Sigmoid colon (tissue), 7 donors: ENCODE measurements at regions of chrX and their contacts with region 1.

Region 1: DNA sequence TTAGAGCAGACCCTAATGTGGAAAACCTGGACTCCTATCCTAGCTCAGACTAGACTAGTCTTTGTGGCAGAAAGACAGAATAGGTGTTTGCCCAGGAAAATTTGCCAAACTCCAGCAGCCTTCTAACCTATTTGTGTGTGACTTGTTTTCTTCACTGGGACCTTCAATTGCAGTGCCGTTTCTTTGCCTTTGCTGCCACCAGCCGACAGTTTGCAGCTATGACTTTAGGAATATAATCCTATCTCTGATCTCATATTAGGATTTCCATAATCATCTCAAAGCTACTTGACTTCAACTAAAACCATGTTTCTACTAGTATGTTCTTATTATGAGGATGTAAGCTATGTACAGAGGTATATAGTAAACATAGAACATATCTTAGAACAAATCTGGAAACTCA is 60.2 kb upstream of the PGAM4 start:
- DNase-seq: no peak
- H3K4me3 ChIP-seq: no peak overlapping the region
- H3K27ac ChIP-seq: no peak overlapping the region
- H3K4me1 ChIP-seq: no peaks in the 10 kb centered on the region
- H3K27me3 ChIP-seq: no peaks in the 10 kb centered on the region
- CTCF ChIP-seq: peak in 2 of 4 experiments; percentile 26 to 28
- EP300 ChIP-seq: no peak
- POLR2A ChIP-seq: no peak

Region 2: GRCh38 chrX:77910108-77910840 is 119.4 kb before region 1 on chrX and contains the start of gene ATP7A:
- intact Hi-C with region 1: loop called (anchors 5 kb)
- DNase-seq: peak; percentile 94
- H3K4me3 ChIP-seq: peak within 1 kb of the TSS; percentile 46 to 59 (median 56)
- H3K27ac ChIP-seq: peak within 1 kb of the TSS; percentile 76 to 87 (median 81)
- H3K4me1 ChIP-seq: peaks cover 0 to 6% (median 0%) of the 10 kb centered on the region in 4 donors
- H3K27me3 ChIP-seq: no peaks in the 10 kb centered on the region
- CTCF ChIP-seq: peak; percentile 29 to 47 (median 44)
- EP300 ChIP-seq: no peak
- POLR2A ChIP-seq: peak in 1 of 2 donors; percentile 29
- total RNA-seq, gene ATP7A: 9.0 to 10.5 (median 10.1) TPM

Region 3: GRCh38 chrX:78092296-78092695 is 62.6 kb after region 1 on chrX:
- intact Hi-C with region 1: no loop called
- DNase-seq: no peak
- H3K4me3 ChIP-seq: no peak overlapping the region
- H3K27ac ChIP-seq: no peak overlapping the region
- H3K4me1 ChIP-seq: no peaks in the 10 kb centered on the region
- H3K27me3 ChIP-seq: no peaks in the 10 kb centered on the region
- CTCF ChIP-seq: no peak
- EP300 ChIP-seq: no peak
- POLR2A ChIP-seq: no peak